ENCODE measurements at regions of chr6 and their contacts with region 1.

Region 1: GRCh38 chr6:43334466-43335095 is 26.0 kb upstream of the CRIP3 start:
- DNase-seq: peak; percentile 56 to 74 (median 68)
- ATAC-seq: peak; percentile 96
- H3K4me3 ChIP-seq: no peak overlapping the region
- H3K27ac ChIP-seq: no peak overlapping the region
- H3K4me1 ChIP-seq: peaks cover 0 to 2% of the 10 kb centered on the region in 2 experiments; a peak in 1 of 5 replicates
- H3K27me3 ChIP-seq: no peaks in the 10 kb centered on the region
- CTCF ChIP-seq: peak; percentile 70 to 84 (median 82)
- EP300 ChIP-seq: no peak
- POLR2A ChIP-seq: no peak
- RAD21 ChIP-seq: peak; percentile 68 to 82

Region 2: DNA sequence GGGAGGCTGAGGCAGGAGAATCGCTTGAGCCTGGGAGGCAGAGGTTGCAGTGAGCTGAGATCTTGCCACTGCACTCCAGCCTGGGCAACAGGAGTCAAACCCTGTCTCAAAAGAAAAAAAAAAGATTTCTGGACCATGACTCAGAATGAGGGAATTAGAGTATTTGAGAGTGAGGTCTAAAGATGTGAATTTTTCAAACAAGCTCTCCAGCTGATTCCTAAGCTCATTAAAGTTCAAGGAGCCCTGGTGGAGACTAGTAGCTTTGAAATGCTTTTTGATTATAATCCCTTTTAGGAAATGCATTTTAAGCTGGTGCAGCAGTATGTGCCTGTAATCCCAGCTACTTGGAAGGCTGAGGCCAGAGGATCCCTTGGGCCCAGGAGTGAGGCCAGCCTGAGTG is 185.3 kb before region 1 on chr6:
- CTCF ChIA-PET with region 1: no interaction called
- POLR2A ChIA-PET with region 1: no interaction called
- in situ Hi-C with region 1: no loop called
- intact Hi-C with region 1: loop called (anchors 5 kb)
- DNase-seq: no peak
- ATAC-seq: no peak
- H3K4me3 ChIP-seq: no peak overlapping the region
- H3K27ac ChIP-seq: no peak overlapping the region
- H3K4me1 ChIP-seq: peaks cover 6 to 16% of the 10 kb centered on the region in 2 experiments; a peak in 4 of 5 replicates
- H3K27me3 ChIP-seq: no peaks in the 10 kb centered on the region; a peak in 1 of 5 replicates
- CTCF ChIP-seq: no peak
- EP300 ChIP-seq: no peak
- POLR2A ChIP-seq: no peak
- RAD21 ChIP-seq: no peak

Region 3: GRCh38 chr6:43263314-43264178 is 71.0 kb before region 1 on chr6:
- CTCF ChIA-PET with region 1: interaction called, 11 read pairs
- POLR2A ChIA-PET with region 1: no interaction called
- in situ Hi-C with region 1: no loop called
- intact Hi-C with region 1: loop called (anchors 1 kb)
- DNase-seq: peak; percentile 79 to 89 (median 83)
- ATAC-seq: peak; percentile 94
- H3K4me3 ChIP-seq: no peak overlapping the region
- H3K27ac ChIP-seq: no peak overlapping the region
- H3K4me1 ChIP-seq: peaks cover 16 to 40% of the 10 kb centered on the region in 2 experiments
- H3K27me3 ChIP-seq: peaks cover 5 to 15% of the 10 kb centered on the region in 2 experiments; a peak in 3 of 5 replicates
- CTCF ChIP-seq: peak; percentile 94 to 98 (median 96)
- EP300 ChIP-seq: no peak
- POLR2A ChIP-seq: no peak
- RAD21 ChIP-seq: peak; percentile 94 to 97

Region 4: DNA sequence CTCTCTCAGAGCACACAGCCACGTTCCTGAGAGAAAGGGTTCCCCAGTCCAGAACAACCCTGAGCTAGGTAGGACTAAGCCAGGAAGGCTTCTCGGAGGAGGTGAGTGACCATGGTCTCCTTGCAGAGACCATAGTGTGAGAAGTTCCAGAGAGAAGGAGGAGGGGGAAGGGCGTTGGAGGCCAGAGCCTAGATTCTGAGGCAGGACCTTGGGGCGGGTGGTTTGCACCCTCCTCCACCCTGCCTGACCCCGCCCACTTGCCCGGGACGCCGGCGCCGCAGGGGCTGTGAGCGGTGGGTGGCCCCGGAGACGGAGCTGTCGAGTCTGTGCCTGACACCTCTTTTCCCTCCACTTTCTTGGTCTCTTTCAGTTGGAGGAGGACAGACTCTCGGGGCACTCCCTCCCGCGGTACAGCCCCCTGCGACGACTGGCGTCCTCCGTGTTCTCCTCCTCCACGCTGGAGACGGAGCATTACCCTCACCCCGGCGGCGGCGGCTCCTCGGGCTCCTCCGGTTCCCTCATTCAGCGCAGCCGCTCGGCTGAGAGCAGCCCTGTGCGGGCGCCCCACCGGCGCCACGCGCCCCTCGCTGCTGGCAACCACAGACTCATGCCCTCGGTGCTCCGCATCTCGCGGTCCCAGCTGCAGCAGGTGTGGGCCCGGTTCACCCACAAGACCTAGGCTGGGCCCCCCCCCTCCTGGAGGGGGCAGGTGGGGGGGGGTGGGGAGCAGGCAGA is 65.1 kb before region 1 on chr6:
- CTCF ChIA-PET with region 1: no interaction called
- POLR2A ChIA-PET with region 1: interaction called, 4 read pairs
- in situ Hi-C with region 1: loop called (anchors 5 kb)
- intact Hi-C with region 1: no loop called
- DNase-seq: peak; percentile 66 to 92 (median 80)
- ATAC-seq: peak; percentile 63
- H3K4me3 ChIP-seq: no peak overlapping the region
- H3K27ac ChIP-seq: no peak overlapping the region
- H3K4me1 ChIP-seq: peaks cover 28 to 34% of the 10 kb centered on the region in 2 experiments
- H3K27me3 ChIP-seq: peaks cover 5 to 26% of the 10 kb centered on the region in 2 experiments
- CTCF ChIP-seq: no peak
- EP300 ChIP-seq: no peak
- POLR2A ChIP-seq: no peak
- RAD21 ChIP-seq: no peak

Region 5: GRCh38 chr6:43698584-43699349 is 364.2 kb after region 1 on chr6:
- CTCF ChIA-PET with region 1: no interaction called
- POLR2A ChIA-PET with region 1: no interaction called
- in situ Hi-C with region 1: no loop called
- intact Hi-C with region 1: no loop called
- DNase-seq: no peak
- ATAC-seq: no peak
- H3K4me3 ChIP-seq: no peak overlapping the region
- H3K27ac ChIP-seq: no peak overlapping the region
- H3K4me1 ChIP-seq: peaks cover 13 to 33% of the 10 kb centered on the region in 2 experiments
- H3K27me3 ChIP-seq: no peaks in the 10 kb centered on the region
- CTCF ChIP-seq: no peak
- EP300 ChIP-seq: no peak
- POLR2A ChIP-seq: no peak
- RAD21 ChIP-seq: no peak